ENCODE measurements at regions of chr17 and their contacts with region 1.

Region 1: DNA sequence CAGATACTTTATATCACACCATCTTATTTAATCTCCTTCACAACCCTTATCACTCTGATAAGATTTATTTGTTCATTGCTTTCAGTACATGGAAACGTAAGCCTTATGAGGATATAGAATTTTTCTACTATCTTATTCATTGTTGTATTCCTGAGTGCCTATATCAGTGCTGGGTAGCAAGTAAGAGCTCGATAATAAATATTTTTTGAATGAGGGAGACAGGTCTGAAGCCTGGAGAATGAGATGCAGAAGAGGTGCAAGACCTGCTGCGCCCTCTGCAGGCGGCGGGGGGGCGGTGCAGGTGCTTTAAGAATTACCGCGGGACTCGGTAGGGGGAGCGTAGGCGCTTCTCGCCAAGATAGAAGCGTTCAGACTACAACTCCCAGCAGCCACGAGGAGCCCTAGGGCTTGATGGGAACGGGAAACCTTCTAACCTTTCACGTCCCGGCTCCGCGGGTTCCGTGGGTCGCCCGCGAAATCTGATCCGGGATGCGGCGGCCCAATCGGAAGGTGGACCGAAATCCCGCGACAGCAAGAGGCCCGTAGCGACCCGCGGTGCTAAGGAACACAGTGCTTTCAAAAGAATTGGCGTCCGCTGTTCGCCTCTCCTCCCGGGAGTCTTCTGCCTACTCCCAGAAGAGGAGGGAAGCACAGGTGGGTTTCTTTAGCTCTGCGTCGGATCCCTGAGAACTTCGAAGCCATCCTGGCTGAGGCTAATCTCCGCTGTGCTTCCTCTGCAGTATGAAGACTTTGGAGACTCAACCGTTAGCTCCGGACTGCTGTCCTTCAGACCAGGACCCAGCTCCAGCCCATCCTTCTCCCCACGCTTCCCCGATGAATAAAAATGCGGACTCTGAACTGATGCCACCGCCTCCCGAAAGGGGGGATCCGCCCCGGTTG is at the start of gene WRAP53:
- DNase-seq: peak; percentile 97
- ATAC-seq: peak; percentile 85
- H3K4me3 Mint-ChIP-seq: peak within 1 kb of the TSS; percentile 98
- H3K27ac Mint-ChIP-seq: peak within 1 kb of the TSS; percentile 100
- H3K4me1 Mint-ChIP-seq: peaks cover 40% of the 10 kb centered on the region
- H3K27me3 Mint-ChIP-seq: no peaks in the 10 kb centered on the region
- total RNA-seq, gene WRAP53: 27.1 to 29.3 TPM

Region 2: GRCh38 chr17:6753006-6753445 is 935.1 kb before region 1 on chr17:
- CTCF ChIA-PET with region 1: no interaction called
- POLR2A ChIA-PET with region 1: no interaction called
- DNase-seq: peak; percentile 65
- ATAC-seq: peak; percentile 24
- H3K4me3 Mint-ChIP-seq: peak overlapping the region; percentile 25
- H3K27ac Mint-ChIP-seq: peak overlapping the region; percentile 82
- H3K4me1 Mint-ChIP-seq: peaks cover 47% of the 10 kb centered on the region
- H3K27me3 Mint-ChIP-seq: peaks cover 3% of the 10 kb centered on the region

Region 3: GRCh38 chr17:7336240-7337175 is 351.6 kb before region 1 on chr17 and contains the start of gene ACAP1:
- CTCF ChIA-PET with region 1: interaction called, 3 read pairs
- POLR2A ChIA-PET with region 1: interaction called, 11 read pairs
- DNase-seq: peak; percentile 95
- ATAC-seq: peak; percentile 95
- H3K4me3 Mint-ChIP-seq: peak within 1 kb of the TSS; percentile 85
- H3K27ac Mint-ChIP-seq: peak within 1 kb of the TSS; percentile 98
- H3K4me1 Mint-ChIP-seq: peaks cover 59% of the 10 kb centered on the region
- H3K27me3 Mint-ChIP-seq: no peaks in the 10 kb centered on the region
- total RNA-seq, gene ACAP1: 573 to 605 TPM

Region 4: DNA sequence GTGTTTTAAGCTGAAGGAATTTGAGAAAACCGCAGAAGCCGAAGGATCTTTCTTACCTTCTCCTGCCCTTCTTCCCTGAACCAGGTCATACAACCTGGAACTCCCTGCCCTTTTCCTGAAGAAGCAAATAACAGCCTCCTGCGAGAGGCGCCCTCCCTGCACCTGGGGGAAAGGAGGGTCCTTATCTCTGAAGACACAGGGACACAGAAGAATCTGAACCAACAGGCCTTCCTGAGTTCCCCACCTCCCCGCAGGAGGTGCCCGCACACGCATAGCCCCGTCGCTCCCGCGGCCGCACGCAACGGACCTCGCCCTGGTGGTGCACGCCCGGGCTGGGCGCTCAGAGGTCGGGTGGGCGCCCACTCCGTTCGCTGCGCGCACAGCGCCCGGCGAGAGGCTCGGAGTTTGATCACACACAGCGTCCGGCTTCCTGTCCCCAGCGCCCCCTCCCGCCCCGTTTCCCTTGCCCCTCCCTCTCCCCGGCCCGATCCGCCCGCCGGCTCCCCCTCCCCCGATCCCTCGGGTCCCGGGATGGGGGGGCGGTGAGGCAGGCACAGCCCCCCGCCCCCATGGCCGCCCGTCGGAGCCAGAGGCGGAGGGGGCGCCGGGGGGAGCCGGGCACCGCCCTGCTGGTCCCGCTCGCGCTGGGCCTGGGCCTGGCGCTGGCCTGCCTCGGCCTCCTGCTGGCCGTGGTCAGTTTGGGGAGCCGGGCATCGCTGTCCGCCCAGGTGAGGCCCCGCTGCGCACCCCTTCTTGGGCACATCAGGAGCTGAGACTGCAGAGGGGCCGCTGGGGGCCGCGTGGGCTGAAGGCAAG is 139.4 kb before region 1 on chr17 and contains the start of gene TNFSF12:
- CTCF ChIA-PET with region 1: no interaction called
- POLR2A ChIA-PET with region 1: interaction called, 13 read pairs
- DNase-seq: peak; percentile 80
- ATAC-seq: peak; percentile 70
- H3K4me3 Mint-ChIP-seq: peak within 1 kb of the TSS; percentile 88
- H3K27ac Mint-ChIP-seq: peak within 1 kb of the TSS; percentile 92
- H3K4me1 Mint-ChIP-seq: peaks cover 57% of the 10 kb centered on the region
- H3K27me3 Mint-ChIP-seq: no peaks in the 10 kb centered on the region
- total RNA-seq, gene TNFSF12: 93.7 to 100 TPM

Region 5: GRCh38 chr17:7614422-7615264 is 73.5 kb before region 1 on chr17 and contains the start of gene FXR2:
- CTCF ChIA-PET with region 1: interaction called, 47 read pairs
- POLR2A ChIA-PET with region 1: interaction called, 50 read pairs
- DNase-seq: peak; percentile 100
- ATAC-seq: peak; percentile 97
- H3K4me3 Mint-ChIP-seq: peak within 1 kb of the TSS; percentile 83
- H3K27ac Mint-ChIP-seq: peak within 1 kb of the TSS; percentile 85
- H3K4me1 Mint-ChIP-seq: peaks cover 25% of the 10 kb centered on the region
- H3K27me3 Mint-ChIP-seq: peaks cover 2% of the 10 kb centered on the region
- total RNA-seq, gene FXR2: 27.6 to 31.8 TPM

Region 6: DNA sequence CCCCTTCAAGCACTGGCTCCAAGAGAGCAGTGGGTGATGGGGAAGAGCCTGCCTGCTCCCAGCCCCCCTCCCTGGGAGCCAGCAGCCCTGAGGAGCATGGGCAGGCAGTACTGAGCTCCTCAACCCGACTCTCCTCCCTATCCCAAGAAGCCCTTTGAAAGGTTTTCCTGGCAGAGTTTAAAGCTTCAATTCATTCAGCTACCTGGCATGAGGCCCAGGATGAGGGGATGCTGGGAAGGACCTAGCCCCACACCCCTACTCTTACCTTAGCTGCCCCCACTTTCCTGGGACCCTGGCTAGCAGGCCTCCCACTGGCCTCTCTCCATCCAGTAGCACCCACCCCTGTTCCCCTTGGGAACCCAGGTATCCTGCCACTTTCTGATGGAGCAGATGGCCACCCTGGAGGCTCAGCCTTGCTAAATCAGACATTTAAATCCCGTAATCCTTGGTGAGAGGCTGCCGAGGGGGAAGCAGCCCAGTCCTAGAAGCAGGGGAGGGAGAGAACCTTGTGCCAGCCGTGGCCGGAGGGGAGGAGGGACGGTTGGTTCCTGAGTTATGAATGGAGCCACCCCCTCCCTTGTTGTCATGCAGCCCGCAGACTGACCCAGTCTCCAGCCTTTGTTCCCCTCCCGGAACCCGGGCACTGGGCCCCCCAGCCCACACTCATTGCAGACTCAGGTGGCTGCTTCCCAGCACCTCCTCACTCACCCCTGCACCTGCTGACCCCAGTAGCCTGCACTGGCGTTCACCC is 20.3 kb before region 1 on chr17:
- CTCF ChIA-PET with region 1: interaction called, 43 read pairs
- POLR2A ChIA-PET with region 1: interaction called, 10 read pairs
- DNase-seq: no peak
- ATAC-seq: no peak
- H3K4me3 Mint-ChIP-seq: no peak overlapping the region
- H3K27ac Mint-ChIP-seq: no peak overlapping the region
- H3K4me1 Mint-ChIP-seq: no peaks in the 10 kb centered on the region
- H3K27me3 Mint-ChIP-seq: no peaks in the 10 kb centered on the region

Region 7: DNA sequence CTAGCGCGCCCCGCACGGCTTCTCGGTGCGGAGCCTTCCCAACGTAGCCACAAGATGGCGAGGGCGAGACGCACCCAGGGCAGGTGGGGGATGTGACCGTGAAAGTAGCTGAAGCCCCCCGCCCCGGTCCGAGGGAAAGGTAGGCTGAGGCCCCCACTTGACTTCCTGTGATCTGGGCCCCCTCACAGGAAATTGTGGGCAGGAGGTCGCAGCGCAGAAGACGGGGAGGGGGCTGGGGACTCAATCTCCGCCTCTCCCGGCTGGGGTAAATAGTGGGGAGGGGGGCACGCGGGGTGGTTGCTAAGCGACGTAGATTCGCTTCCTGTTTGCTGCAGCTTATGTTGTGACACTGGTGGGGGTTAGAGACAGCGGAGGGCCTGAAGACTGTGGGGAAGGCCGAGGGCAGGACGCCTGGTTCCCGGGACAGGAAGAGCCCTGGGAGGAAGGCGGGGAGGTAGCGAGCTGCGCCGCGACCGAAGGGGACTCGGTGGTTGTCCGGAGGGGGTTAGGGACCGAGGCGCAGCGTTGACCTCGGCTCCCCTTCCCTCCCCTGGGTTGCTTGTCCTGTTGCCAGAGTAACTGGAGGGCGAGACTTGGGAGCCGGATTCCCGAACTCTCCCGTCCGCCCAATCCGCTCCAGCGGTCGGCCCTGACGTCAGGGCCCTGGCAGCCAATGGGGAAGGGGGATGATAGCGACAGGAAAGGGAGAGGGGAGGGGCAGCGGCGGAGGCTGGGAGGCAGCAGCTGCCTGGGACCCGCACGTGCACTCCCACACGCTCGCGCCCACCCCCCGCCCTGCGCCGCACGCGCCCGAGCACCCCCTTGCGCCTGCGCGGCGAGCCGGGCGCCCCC is 147.0 kb after region 1 on chr17:
- CTCF ChIA-PET with region 1: interaction called, 14 read pairs
- POLR2A ChIA-PET with region 1: interaction called, 3 read pairs
- DNase-seq: peak; percentile 91
- ATAC-seq: peak; percentile 56
- H3K4me3 Mint-ChIP-seq: peak overlapping the region; percentile 90
- H3K27ac Mint-ChIP-seq: peak overlapping the region; percentile 94
- H3K4me1 Mint-ChIP-seq: peaks cover 55% of the 10 kb centered on the region
- H3K27me3 Mint-ChIP-seq: peaks cover 8% of the 10 kb centered on the region